Heart right ventricle (tissue), 16 donors: ENCODE measurements at regions of chr10 and their contacts with region 1.

Region 1: DNA sequence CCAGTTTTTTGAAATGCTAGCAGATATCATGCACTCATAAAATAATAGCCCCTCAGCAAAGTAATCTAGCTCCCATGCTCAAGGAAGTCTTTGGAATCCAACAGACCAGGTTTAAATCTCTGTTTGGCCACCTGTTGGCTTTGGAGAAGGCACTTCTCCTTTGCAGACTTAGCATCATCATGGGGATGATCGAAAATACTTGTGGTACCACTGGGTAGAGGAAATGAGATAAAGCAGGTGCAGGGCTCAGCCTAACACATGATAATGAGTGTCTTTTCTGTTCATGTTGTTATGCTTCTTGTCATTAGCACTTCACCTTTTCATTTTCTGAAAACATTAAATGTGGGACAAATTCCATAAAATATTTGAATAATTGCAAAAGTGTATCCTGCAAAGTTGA is 67.4 kb downstream of the LRRC18 start:
- DNase-seq: no peak
- ATAC-seq: no peak
- H3K4me3 ChIP-seq: no peak overlapping the region
- H3K27ac ChIP-seq: no peak overlapping the region
- H3K4me1 ChIP-seq: no peaks in the 10 kb centered on the region
- H3K27me3 ChIP-seq: no peaks in the 10 kb centered on the region
- CTCF ChIP-seq: no peak

Region 2: GRCh38 chr10:48958598-48959190 is 86.5 kb after region 1 on chr10:
- intact Hi-C with region 1: loop called in 1 of 10 experiments (anchors 10 kb)
- DNase-seq: no peak
- ATAC-seq: no peak
- H3K4me3 ChIP-seq: no peak overlapping the region
- H3K27ac ChIP-seq: no peak overlapping the region
- H3K4me1 ChIP-seq: no peaks in the 10 kb centered on the region
- H3K27me3 ChIP-seq: peaks cover 0 to 3% (median 0%) of the 10 kb centered on the region in 7 donors
- CTCF ChIP-seq: no peak